Esophagus squamous epithelium (tissue), 5 donors: ENCODE measurements at regions of chr17 and their contacts with region 1.

Region 1: DNA sequence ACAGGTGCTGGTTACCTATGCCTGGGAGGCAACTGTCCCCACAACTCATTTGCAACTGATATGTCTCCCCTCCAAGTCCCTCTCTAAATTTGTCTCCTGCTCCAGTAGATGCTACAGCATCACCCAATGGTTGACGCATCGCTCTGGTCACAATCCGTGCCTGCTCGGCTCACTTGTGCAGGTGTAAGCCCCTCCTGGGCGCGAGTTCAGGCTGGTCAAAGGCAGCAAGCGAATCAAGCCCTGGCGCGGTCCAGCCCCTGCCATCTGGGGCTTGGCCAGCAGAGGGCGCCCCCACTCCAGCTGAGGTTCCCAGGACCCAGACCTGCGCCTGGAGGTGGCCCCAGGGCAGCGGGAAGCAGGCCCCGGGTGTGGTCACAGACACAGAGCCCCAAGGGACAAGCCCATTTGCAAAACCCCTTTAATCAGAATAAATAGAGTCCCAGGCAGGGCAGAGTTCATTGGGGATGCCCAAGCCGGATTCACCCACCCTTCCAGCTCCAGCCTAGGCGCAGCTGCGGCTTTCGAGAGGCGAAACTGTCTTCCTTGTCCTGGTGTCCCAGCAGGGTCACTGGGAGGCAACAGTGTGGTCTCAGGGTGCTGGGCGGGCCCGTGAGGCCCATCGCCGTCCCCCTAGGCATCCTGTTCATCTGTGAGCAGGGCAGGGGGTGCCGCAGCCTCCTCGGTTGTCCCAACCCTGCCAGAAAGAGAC is 15.9 kb downstream of the TMC6 start:
- DNase-seq: no peak
- H3K4me3 ChIP-seq: no peak overlapping the region
- H3K27ac ChIP-seq: no peak overlapping the region
- H3K4me1 ChIP-seq: peaks cover 15 to 48% (median 19%) of the 10 kb centered on the region in 3 donors
- H3K27me3 ChIP-seq: no peaks in the 10 kb centered on the region
- CTCF ChIP-seq: peak; percentile 98 to 99 (median 99)
- POLR2A ChIP-seq: peak in 1 of 4 donors; percentile 15

Region 2: GRCh38 chr17:78176548-78177025 is 63.9 kb after region 1 on chr17:
- intact Hi-C with region 1: loop called (anchors 2 kb)
- DNase-seq: no peak
- H3K4me3 ChIP-seq: no peak overlapping the region
- H3K27ac ChIP-seq: peak overlapping the region in 3 of 4 donors; percentile 82 to 98 (median 94)
- H3K4me1 ChIP-seq: peaks cover 43 to 83% (median 77%) of the 10 kb centered on the region in 3 donors
- H3K27me3 ChIP-seq: no peaks in the 10 kb centered on the region
- CTCF ChIP-seq: peak; percentile 69 to 94 (median 92)
- POLR2A ChIP-seq: no peak

Region 3: GRCh38 chr17:78241277-78242023 is 128.8 kb after region 1 on chr17:
- intact Hi-C with region 1: loop called (anchors 10 kb)
- DNase-seq: no peak
- H3K4me3 ChIP-seq: no peak overlapping the region
- H3K27ac ChIP-seq: no peak overlapping the region
- H3K4me1 ChIP-seq: peaks cover 0 to 14% (median 8%) of the 10 kb centered on the region in 3 donors
- H3K27me3 ChIP-seq: no peaks in the 10 kb centered on the region
- CTCF ChIP-seq: no peak
- POLR2A ChIP-seq: no peak